ENCODE measurements at regions of chr11 and their contacts with region 1.

Region 1: GRCh38 chr11:94623120-94623735 is 56.1 kb downstream of the PIWIL4 start:
- DNase-seq: no peak
- ATAC-seq: peak; percentile 96

Region 2: GRCh38 chr11:94553938-94554337 is 69.3 kb before region 1 on chr11:
- intact Hi-C with region 1: no loop called
- DNase-seq: no peak
- ATAC-seq: no peak

Region 3: GRCh38 chr11:94721565-94722292 is 98.5 kb after region 1 on chr11:
- intact Hi-C with region 1: no loop called
- DNase-seq: no peak
- ATAC-seq: no peak

Region 4: GRCh38 chr11:94767761-94768601 is 144.8 kb after region 1 on chr11 and contains the start of gene AMOTL1:
- intact Hi-C with region 1: loop called (anchors 10 kb)
- DNase-seq: peak; percentile 92
- ATAC-seq: peak; percentile 93
- total RNA-seq, gene AMOTL1: 45.5 TPM

Region 5: DNA sequence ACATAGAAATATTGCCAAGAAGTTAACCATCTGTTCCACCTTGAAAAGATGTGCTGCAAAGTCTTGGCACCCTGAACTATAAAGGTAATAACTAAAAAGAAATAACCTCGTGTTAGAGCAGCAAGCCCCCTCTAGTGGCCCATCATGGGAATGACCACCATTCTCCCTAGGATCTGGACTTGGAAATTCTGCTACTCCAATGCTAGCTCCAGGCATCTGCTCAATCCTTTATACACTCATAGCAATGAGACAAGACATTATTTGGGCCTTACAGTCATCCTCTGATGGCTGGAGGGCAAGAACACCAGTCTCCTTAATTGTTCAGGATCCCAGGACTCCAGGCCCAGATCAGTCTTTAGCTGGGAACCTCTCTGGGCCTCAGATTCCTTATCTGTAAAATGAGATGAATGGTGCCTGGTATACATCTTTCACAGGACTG is 274.1 kb after region 1 on chr11:
- intact Hi-C with region 1: loop called (anchors 5 kb)
- DNase-seq: no peak
- ATAC-seq: peak; percentile 64

Measured in Right ventricle myocardium superior (tissue), 1 donor.